ENCODE measurements at regions of chr21 and their contacts with region 1.

Region 1: GRCh38 chr21:14737922-14738321 is 191.8 kb upstream of the SAMSN1 start:
- DNase-seq: no peak
- H3K4me3 ChIP-seq: no peak overlapping the region
- H3K27ac ChIP-seq: no peak overlapping the region
- H3K4me1 ChIP-seq: peaks cover 0 to 11% (median 9%) of the 10 kb centered on the region in 6 donors
- H3K27me3 ChIP-seq: no peaks in the 10 kb centered on the region
- CTCF ChIP-seq: peak; percentile 43 to 81 (median 73)
- POLR2A ChIP-seq: no peak

Region 2: GRCh38 chr21:14438211-14438610 is 299.7 kb before region 1 on chr21:
- intact Hi-C with region 1: loop called (anchors 2 kb)
- DNase-seq: no peak
- H3K4me3 ChIP-seq: no peak overlapping the region
- H3K27ac ChIP-seq: peak overlapping the region in 1 of 8 donors; percentile 24
- H3K4me1 ChIP-seq: no peaks in the 10 kb centered on the region
- H3K27me3 ChIP-seq: no peaks in the 10 kb centered on the region
- CTCF ChIP-seq: no peak
- POLR2A ChIP-seq: no peak

Measured in spleen (tissue), 13 donors.